ENCODE measurements at regions of chr16 and their contacts with region 1.

Region 1: DNA sequence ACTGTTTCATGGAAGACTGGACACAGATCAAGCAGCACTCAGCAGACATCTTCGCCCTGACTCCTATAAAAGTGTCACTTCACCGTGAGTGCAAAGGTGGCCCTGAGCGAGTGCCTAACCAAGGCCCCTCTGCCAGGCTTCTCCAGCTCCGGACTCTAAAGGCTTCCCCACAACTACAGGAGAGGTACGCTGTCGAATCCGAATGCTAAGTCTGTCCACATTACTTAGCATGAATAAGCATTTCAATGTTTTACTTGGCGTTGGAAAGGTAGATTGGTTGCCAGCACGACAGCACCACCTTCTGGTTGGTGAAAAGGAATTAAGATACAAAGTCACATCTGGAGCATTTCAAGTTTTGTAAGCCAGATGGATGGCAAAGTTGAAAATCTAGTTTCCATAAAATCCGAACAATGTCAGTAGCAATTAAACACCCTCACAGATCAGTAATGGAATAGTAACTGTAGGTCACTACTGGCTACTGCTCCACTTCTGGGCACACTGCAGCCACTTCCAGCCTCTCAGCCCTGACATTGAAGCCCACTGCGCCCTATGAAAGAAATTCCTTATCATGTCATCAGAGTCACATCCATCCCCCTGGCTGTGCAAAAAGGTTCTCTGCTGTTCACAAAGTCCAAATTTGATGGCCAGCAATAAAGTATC is 100.9 kb downstream of the PARN start:
- DNase-seq: peak; percentile 93
- ATAC-seq: peak; percentile 90
- H3K4me3 ChIP-seq: peak overlapping the region; percentile 26; the same call in 1 of the 2 replicates
- H3K27ac ChIP-seq: peak overlapping the region; percentile 84
- H3K4me1 ChIP-seq: peaks cover 8% of the 10 kb centered on the region
- H3K27me3 ChIP-seq: no peaks in the 10 kb centered on the region
- CTCF ChIP-seq: peak; percentile 95
- POLR2A ChIP-seq: peak; percentile 51; the same call in 1 of the 2 replicates
- RAD21 ChIP-seq: peak; percentile 100

Region 2: GRCh38 chr16:14249291-14250032 is 279.7 kb before region 1 on chr16:
- CTCF ChIA-PET with region 1: interaction called, 4 read pairs
- POLR2A ChIA-PET with region 1: no interaction called
- dilution Hi-C with region 1: no loop called
- in situ Hi-C with region 1: no loop called
- intact Hi-C with region 1: loop called (anchors 1 kb)
- DNase-seq: peak; percentile 43
- ATAC-seq: peak; percentile 70
- H3K4me3 ChIP-seq: no peak overlapping the region
- H3K27ac ChIP-seq: no peak overlapping the region
- H3K4me1 ChIP-seq: no peaks in the 10 kb centered on the region
- H3K27me3 ChIP-seq: no peaks in the 10 kb centered on the region
- CTCF ChIP-seq: peak; percentile 94
- POLR2A ChIP-seq: no peak
- RAD21 ChIP-seq: peak; percentile 89

Region 3: GRCh38 chr16:14285513-14286385 is 243.4 kb before region 1 on chr16:
- CTCF ChIA-PET with region 1: interaction called, 4 read pairs
- POLR2A ChIA-PET with region 1: no interaction called
- dilution Hi-C with region 1: no loop called
- in situ Hi-C with region 1: no loop called
- intact Hi-C with region 1: loop called (anchors 1 kb)
- DNase-seq: peak; percentile 97
- ATAC-seq: peak; percentile 95
- H3K4me3 ChIP-seq: peak overlapping the region; percentile 66
- H3K27ac ChIP-seq: peak overlapping the region; percentile 26; the same call in 1 of the 2 replicates
- H3K4me1 ChIP-seq: no peaks in the 10 kb centered on the region
- H3K27me3 ChIP-seq: no peaks in the 10 kb centered on the region
- CTCF ChIP-seq: no peak
- POLR2A ChIP-seq: no peak
- RAD21 ChIP-seq: no peak

Region 4: DNA sequence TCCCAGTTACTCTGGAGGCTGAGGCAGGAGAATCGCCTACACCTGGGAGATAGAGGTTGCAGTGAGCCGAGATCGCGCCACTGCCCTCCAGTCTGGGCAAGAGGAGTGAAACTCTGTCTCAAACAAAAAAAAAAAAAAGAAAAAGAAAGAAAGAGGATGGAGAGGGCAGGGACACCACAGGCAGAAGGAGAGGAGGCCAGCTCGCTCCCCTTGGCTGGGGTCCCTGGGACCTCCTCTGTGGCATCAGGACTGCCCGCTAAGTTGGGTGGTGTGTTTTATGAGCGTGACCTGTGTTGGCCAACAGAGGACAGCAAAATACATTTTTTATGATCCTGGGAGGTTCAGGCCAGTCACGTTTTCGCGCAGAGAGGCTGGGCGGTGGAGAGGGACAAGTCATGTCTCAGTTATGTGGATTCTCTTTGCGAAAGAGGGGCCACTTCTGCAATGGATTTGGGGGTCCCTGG is 228.4 kb before region 1 on chr16:
- CTCF ChIA-PET with region 1: interaction called, 3 read pairs
- POLR2A ChIA-PET with region 1: no interaction called
- dilution Hi-C with region 1: no loop called
- in situ Hi-C with region 1: loop called (anchors 5 kb)
- intact Hi-C with region 1: loop called (anchors 1 kb)
- DNase-seq: peak; percentile 85
- ATAC-seq: peak; percentile 62
- H3K4me3 ChIP-seq: no peak overlapping the region
- H3K27ac ChIP-seq: no peak overlapping the region
- H3K4me1 ChIP-seq: peaks cover 3% of the 10 kb centered on the region
- H3K27me3 ChIP-seq: no peaks in the 10 kb centered on the region
- CTCF ChIP-seq: peak; percentile 79
- POLR2A ChIP-seq: no peak
- RAD21 ChIP-seq: peak; percentile 89

Region 5: GRCh38 chr16:14364386-14365204 is 164.5 kb before region 1 on chr16:
- CTCF ChIA-PET with region 1: no interaction called
- POLR2A ChIA-PET with region 1: no interaction called
- dilution Hi-C with region 1: no loop called
- in situ Hi-C with region 1: no loop called
- intact Hi-C with region 1: loop called (anchors 5 kb)
- DNase-seq: peak; percentile 89
- ATAC-seq: peak; percentile 63
- H3K4me3 ChIP-seq: no peak overlapping the region; the same call in 1 of the 2 replicates
- H3K27ac ChIP-seq: 0 out of 2 replicates have a peak overlapping the region, but pooled peaks have one; percentile 11
- H3K4me1 ChIP-seq: peaks cover 10% of the 10 kb centered on the region
- H3K27me3 ChIP-seq: no peaks in the 10 kb centered on the region; the same call in 1 of the 2 replicates
- CTCF ChIP-seq: no peak
- POLR2A ChIP-seq: no peak
- RAD21 ChIP-seq: no peak

Region 6: GRCh38 chr16:14399378-14400284 is 129.5 kb before region 1 on chr16:
- CTCF ChIA-PET with region 1: no interaction called
- POLR2A ChIA-PET with region 1: no interaction called
- dilution Hi-C with region 1: no loop called
- in situ Hi-C with region 1: no loop called
- intact Hi-C with region 1: no loop called
- DNase-seq: peak; percentile 62
- ATAC-seq: peak; percentile 93
- H3K4me3 ChIP-seq: no peak overlapping the region
- H3K27ac ChIP-seq: peak overlapping the region; percentile 58
- H3K4me1 ChIP-seq: peaks cover 8% of the 10 kb centered on the region
- H3K27me3 ChIP-seq: no peaks in the 10 kb centered on the region
- CTCF ChIP-seq: no peak
- POLR2A ChIP-seq: no peak
- RAD21 ChIP-seq: no peak

Region 7: DNA sequence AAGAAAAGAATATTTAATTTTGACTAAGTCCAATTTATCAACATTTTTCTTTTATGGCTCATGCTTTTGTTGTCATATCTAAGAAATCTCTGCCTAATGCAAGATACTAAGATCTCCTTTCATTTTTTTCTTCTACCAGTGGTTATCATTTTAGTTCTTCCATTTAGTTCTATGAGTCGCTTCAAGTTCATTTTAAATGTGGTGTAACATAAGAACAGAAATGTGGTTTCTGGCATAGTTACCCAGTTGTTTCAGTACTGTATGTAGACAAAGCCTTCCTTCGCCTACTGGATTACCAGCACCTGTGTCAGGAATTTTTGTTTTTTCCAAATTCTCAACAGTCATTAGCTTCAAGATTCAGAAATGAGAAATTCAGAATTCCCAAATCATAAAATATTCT is 74.7 kb before region 1 on chr16:
- CTCF ChIA-PET with region 1: no interaction called
- POLR2A ChIA-PET with region 1: no interaction called
- dilution Hi-C with region 1: no loop called
- in situ Hi-C with region 1: no loop called
- intact Hi-C with region 1: loop called (anchors 5 kb)
- DNase-seq: peak; percentile 81
- ATAC-seq: peak; percentile 48
- H3K4me3 ChIP-seq: no peak overlapping the region
- H3K27ac ChIP-seq: no peak overlapping the region
- H3K4me1 ChIP-seq: peaks cover 11% of the 10 kb centered on the region
- H3K27me3 ChIP-seq: no peaks in the 10 kb centered on the region
- CTCF ChIP-seq: no peak
- POLR2A ChIP-seq: no peak
- RAD21 ChIP-seq: no peak

Measured in IMR-90 (cell line).